Dorsolateral prefrontal cortex (tissue), 120 donors: ENCODE measurements at regions of chr10 and their contacts with region 1.

Region 1: DNA sequence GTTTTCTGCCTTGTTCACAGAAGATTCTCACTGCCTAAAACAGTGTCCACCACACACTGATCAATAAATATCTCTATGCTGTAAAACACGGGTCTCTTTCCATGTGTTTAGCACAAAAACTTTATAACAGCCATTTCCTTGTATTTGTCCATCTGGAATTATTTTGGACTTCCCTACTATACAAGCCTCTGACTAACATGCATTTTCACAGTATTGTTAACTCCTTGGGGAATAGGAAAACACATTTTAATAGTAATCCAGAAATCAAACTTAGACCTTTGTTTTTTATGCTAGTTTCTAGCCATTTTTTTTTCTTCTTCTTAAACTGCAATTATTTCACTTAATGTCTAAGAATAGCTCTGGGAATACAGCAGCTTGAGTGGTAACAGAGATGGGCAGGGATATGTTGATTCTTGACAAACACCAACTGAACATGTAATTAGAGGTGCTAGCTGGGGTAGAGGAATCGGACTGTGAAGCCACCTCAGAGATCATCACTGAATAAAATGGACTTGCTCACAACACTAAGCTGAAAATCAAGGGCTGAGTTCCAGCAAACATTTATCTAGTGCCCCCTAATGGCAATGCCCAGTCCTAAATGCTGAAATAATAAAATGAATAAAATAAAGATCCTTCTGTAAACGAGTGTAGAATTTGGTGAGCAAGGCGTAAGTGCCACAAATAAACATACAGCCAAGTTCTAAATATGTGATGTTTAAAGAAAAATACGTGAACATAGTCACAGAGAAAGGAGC is 593.1 kb downstream of the SORCS1 start:
- DNase-seq: peak in 1 of 10 donors; percentile 38
- H3K4me3 ChIP-seq: peak overlapping the region in 15 of 59 donors; percentile 3 to 41 (median 28)
- H3K27ac ChIP-seq: peak overlapping the region in 4 of 59 donors; percentile 4 to 56 (median 28)
- H3K27me3 ChIP-seq: no peaks in the 10 kb centered on the region
- CTCF ChIP-seq: peak; percentile 42 to 92 (median 70)

Region 2: GRCh38 chr10:105950410-105950809 is 621.0 kb before region 1 on chr10:
- intact Hi-C with region 1: loop called in 1 of 2 experiments (anchors 10 kb)
- DNase-seq: peak in 8 of 10 donors; percentile 10 to 79 (median 51)
- H3K4me3 ChIP-seq: no peak overlapping the region
- H3K27ac ChIP-seq: no peak overlapping the region
- H3K27me3 ChIP-seq: no peaks in the 10 kb centered on the region
- CTCF ChIP-seq: peak; percentile 49 to 95 (median 86)

Region 3: DNA sequence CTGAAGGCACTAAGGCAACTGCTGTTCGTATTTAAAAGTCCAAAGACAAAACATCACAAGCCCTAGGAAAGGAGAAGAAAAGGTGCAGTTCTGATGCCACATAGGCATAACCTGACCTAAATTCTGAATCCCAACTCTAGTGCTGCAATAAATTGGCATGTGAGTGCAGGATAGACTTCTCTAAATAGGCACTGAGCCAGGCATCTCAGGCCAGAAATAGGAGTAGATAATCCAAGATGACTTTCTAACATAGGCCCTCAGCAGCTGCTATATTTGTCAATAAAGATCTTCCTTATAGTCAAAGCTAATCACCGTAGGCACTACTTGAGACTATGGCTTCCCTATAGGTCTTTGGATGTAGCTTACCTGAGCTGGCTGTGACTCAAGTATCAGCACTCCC is 570.6 kb before region 1 on chr10:
- intact Hi-C with region 1: no loop called
- DNase-seq: no peak
- H3K4me3 ChIP-seq: no peak overlapping the region
- H3K27ac ChIP-seq: no peak overlapping the region
- H3K27me3 ChIP-seq: no peaks in the 10 kb centered on the region
- CTCF ChIP-seq: no peak

Region 4: DNA sequence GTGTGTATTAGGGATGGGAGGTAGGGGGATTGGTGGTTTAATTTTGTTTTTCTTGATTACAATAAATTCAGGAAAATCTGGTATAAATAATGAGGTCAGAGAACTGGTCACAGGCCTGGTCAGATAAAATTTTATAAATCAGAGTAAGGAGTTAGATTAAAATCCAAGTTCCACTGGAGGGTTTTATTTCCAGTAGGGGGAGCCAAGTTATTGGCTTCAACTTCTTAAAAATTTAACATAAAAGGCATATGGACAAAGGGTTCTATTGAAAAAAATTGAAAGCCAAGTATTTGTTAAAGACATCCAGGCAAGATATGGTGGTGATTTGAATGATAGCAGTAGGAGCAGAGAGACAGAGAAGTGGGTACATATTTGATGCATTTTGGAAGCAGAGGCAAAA is 170.2 kb before region 1 on chr10:
- intact Hi-C with region 1: loop called (anchors 5 kb)
- DNase-seq: no peak
- H3K4me3 ChIP-seq: no peak overlapping the region
- H3K27ac ChIP-seq: no peak overlapping the region
- H3K27me3 ChIP-seq: no peaks in the 10 kb centered on the region
- CTCF ChIP-seq: peak in 55 of 56 donors; percentile 30 to 73 (median 55)

Region 5: DNA sequence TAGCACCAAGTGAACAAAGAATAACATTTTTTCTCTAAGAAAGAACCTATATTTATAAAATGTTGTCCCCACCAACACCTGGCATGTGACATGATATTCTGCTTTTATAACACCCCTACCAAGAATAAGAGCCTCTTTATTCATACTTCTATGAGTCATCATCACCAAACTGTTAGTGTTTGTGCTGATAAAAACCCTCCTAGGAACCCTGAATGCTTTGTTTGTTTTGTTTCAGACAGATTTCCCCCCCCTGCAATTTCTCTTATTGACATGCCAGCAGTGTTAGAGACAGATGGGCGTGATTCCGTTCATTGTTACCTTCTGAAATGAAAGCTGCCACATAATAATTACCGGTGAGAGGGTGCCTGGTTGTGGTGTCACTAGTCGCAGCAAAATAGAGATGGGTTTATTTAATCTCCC is 58.0 kb before region 1 on chr10:
- intact Hi-C with region 1: loop called in 1 of 2 experiments (anchors 1 kb)
- DNase-seq: peak in 1 of 10 donors; percentile 26
- H3K4me3 ChIP-seq: peak overlapping the region in 41 of 59 donors; percentile 3 to 54 (median 28)
- H3K27ac ChIP-seq: peak overlapping the region in 58 of 59 donors; percentile 44 to 94 (median 82)
- H3K27me3 ChIP-seq: no peaks in the 10 kb centered on the region
- CTCF ChIP-seq: no peak

Region 6: GRCh38 chr10:106672517-106673175 is 101.3 kb after region 1 on chr10:
- intact Hi-C with region 1: loop called in 1 of 2 experiments (anchors 10 kb)
- DNase-seq: no peak
- H3K4me3 ChIP-seq: no peak overlapping the region
- H3K27ac ChIP-seq: peak overlapping the region in 37 of 59 donors; percentile 1 to 88 (median 75)
- H3K27me3 ChIP-seq: no peaks in the 10 kb centered on the region
- CTCF ChIP-seq: no peak

Region 7: GRCh38 chr10:106780632-106781031 is 209.3 kb after region 1 on chr10:
- intact Hi-C with region 1: no loop called
- DNase-seq: no peak
- H3K4me3 ChIP-seq: no peak overlapping the region
- H3K27ac ChIP-seq: no peak overlapping the region
- H3K27me3 ChIP-seq: peaks cover 0 to 4% (median 0%) of the 10 kb centered on the region in 45 donors
- CTCF ChIP-seq: no peak